Astrocyte of the cerebellum (primary cell): ENCODE measurements at regions of chr4 and their contacts with region 1.

Region 1: GRCh38 chr4:70839589-70840093 is at the start of gene GRSF1:
- DNase-seq: peak; percentile 78
- H3K4me3 ChIP-seq: peak within 1 kb of the TSS; percentile 65
- CTCF ChIP-seq: peak; percentile 27

Region 2: GRCh38 chr4:70759627-70760026 is 80.0 kb before region 1 on chr4:
- in situ Hi-C with region 1: no loop called
- DNase-seq: no peak
- H3K4me3 ChIP-seq: no peak overlapping the region
- CTCF ChIP-seq: peak; percentile 4

Region 3: DNA sequence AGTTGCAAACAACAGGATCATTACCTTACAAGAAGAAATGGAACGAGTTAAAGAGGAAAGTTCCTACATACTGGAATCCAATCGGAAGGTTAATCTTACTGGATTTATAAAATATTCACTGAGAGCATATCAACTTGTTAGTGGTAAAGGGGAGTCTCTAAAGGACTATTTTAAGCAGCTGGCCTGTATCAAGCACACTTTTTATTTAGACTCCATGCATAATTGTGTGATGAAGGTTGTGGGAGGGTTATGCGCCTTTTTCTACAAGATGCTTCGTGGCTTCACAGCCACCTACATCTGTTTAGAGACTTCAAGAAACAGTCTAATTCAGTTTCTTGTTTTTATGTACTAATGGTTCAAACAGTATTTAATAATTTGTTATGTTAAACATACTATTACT is 56.5 kb before region 1 on chr4:
- in situ Hi-C with region 1: no loop called
- DNase-seq: no peak
- H3K4me3 ChIP-seq: no peak overlapping the region
- CTCF ChIP-seq: no peak

Region 4: DNA sequence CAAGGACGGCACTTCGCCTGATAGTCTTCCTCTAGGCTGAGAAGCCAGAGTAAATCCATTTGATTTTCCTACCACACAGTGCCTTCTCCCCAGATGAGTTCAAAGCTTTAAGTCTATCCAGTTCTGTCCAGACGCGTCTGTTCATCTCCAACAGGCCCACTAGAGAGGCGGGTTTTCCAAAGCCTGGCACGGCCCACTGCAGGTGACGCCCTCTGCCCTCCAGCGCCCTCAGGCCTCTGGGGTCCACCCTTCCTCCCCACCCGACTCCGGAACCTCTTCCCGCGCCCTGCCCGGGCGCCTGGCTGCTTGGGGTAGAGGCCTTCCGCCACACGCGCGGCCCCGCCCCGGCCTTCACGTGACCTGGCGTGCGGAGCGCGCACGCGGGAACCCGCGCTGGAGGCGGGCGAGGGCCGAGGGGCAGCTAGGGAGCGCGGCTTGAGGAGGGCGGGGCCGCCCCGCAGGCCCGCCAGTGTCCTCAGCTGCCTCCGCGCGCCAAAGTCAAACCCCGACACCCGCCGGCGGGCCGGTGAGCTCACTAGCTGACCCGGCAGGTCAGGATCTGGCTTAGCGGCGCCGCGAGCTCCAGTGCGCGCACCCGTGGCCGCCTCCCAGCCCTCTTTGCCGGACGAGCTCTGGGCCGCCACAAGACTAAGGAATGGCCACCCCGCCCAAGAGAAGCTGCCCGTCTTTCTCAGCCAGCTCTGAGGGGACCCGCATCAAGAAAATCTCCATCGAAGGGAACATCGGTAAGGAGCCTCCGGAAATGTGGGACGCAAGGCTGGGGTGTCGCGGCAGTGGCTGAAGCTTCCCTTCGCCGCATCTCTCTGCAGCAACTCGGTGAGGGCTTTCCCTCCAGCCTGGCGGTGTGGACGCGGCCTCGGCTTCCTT is 153.8 kb after region 1 on chr4 and contains the start of gene DCK:
- in situ Hi-C with region 1: loop called (anchors 25 kb)
- DNase-seq: peak; percentile 60
- H3K4me3 ChIP-seq: peak within 1 kb of the TSS; percentile 81
- CTCF ChIP-seq: no peak